Naive thymus-derived CD4-positive, alpha-beta T cell (primary cell): ENCODE measurements at regions of chr3 and their contacts with region 1.

Region 1: GRCh38 chr3:27484015-27484844 is at the start of gene SLC4A7:
- DNase-seq: peak; percentile 95 to 99 (median 97)
- ATAC-seq: peak; percentile 96
- H3K4me3 ChIP-seq: peak within 1 kb of the TSS; percentile 96
- H3K4me3 Mint-ChIP-seq: peak within 1 kb of the TSS; percentile 94 to 100 (median 99)
- H3K27ac ChIP-seq: peak within 1 kb of the TSS; percentile 90
- H3K27ac Mint-ChIP-seq: peak within 1 kb of the TSS; percentile 90 to 99 (median 95)
- H3K4me1 ChIP-seq: peaks cover 25 to 29% of the 10 kb centered on the region in 2 donors
- H3K4me1 Mint-ChIP-seq: peaks cover 35 to 42% (median 39%) of the 10 kb centered on the region in 7 donors
- H3K27me3 ChIP-seq: no peaks in the 10 kb centered on the region
- H3K27me3 Mint-ChIP-seq: no peaks in the 10 kb centered on the region
- total RNA-seq, gene SLC4A7: 34.9 to 69.1 (median 41.5) TPM

Region 2: GRCh38 chr3:25664810-25665314 is 1819.4 kb before region 1 on chr3 and contains the start of gene TOP2B:
- CTCF ChIA-PET with region 1: interaction called, 3 read pairs
- POLR2A ChIA-PET with region 1: no interaction called
- intact Hi-C with region 1: loop called (anchors 5 to 10 kb)
- DNase-seq: peak; percentile 87 to 96 (median 95)
- ATAC-seq: peak; percentile 96
- H3K4me3 ChIP-seq: peak within 1 kb of the TSS; percentile 63
- H3K4me3 Mint-ChIP-seq: peak within 1 kb of the TSS; percentile 89 to 100 (median 99)
- H3K27ac ChIP-seq: peak within 1 kb of the TSS; percentile 95
- H3K27ac Mint-ChIP-seq: peak within 1 kb of the TSS; percentile 97 to 100 (median 99)
- H3K4me1 ChIP-seq: peaks cover 11 to 34% of the 10 kb centered on the region in 2 donors
- H3K4me1 Mint-ChIP-seq: peaks cover 20 to 57% (median 50%) of the 10 kb centered on the region in 7 donors
- H3K27me3 ChIP-seq: no peaks in the 10 kb centered on the region
- H3K27me3 Mint-ChIP-seq: peaks cover 0 to 4% (median 0%) of the 10 kb centered on the region in 5 donors
- total RNA-seq, gene TOP2B: 109 to 190 (median 127) TPM

Region 3: GRCh38 chr3:27368831-27369607 is 115.2 kb before region 1 on chr3 and contains the start of gene NEK10:
- CTCF ChIA-PET with region 1: no interaction called
- POLR2A ChIA-PET with region 1: interaction called, 3 read pairs
- intact Hi-C with region 1: loop called (anchors 1 kb)
- DNase-seq: peak; percentile 86 to 94 (median 91)
- ATAC-seq: peak; percentile 100
- H3K4me3 ChIP-seq: peak within 1 kb of the TSS; percentile 96
- H3K4me3 Mint-ChIP-seq: peak within 1 kb of the TSS; percentile 81 to 96 (median 93)
- H3K27ac ChIP-seq: peak within 1 kb of the TSS; percentile 11
- H3K27ac Mint-ChIP-seq: peak within 1 kb of the TSS; percentile 26 to 91 (median 85)
- H3K4me1 ChIP-seq: peaks cover 5 to 9% of the 10 kb centered on the region in 2 donors
- H3K4me1 Mint-ChIP-seq: peaks cover 7 to 18% (median 14%) of the 10 kb centered on the region in 7 donors
- H3K27me3 ChIP-seq: no peaks in the 10 kb centered on the region
- H3K27me3 Mint-ChIP-seq: peaks cover 0 to 4% (median 0%) of the 10 kb centered on the region in 5 donors
- total RNA-seq, gene NEK10: 0.64 to 2.0 (median 0.95) TPM

Region 4: DNA sequence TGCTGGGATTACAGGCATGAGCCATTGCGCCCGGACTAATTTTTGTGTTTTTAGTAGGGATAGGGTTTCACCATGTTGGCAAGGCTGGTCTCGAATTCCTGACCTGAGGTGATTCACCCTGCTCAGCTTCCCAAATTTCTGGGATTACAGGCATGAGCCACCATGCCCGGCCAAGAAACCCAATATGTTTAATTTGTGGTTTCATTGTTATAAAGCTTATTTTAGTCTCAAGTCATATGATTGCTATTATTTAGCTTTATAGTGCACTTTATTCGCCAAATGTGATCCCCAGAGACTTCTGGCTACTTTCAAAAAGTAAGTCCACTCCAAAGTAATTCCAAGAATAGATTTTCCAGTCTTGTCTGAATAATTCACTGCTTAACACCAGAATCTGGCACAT is 19.3 kb after region 1 on chr3:
- CTCF ChIA-PET with region 1: no interaction called
- POLR2A ChIA-PET with region 1: no interaction called
- intact Hi-C with region 1: no loop called
- DNase-seq: no peak
- ATAC-seq: no peak
- H3K4me3 ChIP-seq: no peak overlapping the region
- H3K4me3 Mint-ChIP-seq: no peak overlapping the region
- H3K27ac ChIP-seq: no peak overlapping the region
- H3K27ac Mint-ChIP-seq: no peak overlapping the region
- H3K4me1 ChIP-seq: no peaks in the 10 kb centered on the region
- H3K4me1 Mint-ChIP-seq: peaks cover 0 to 2% (median 0%) of the 10 kb centered on the region in 7 donors
- H3K27me3 ChIP-seq: no peaks in the 10 kb centered on the region
- H3K27me3 Mint-ChIP-seq: no peaks in the 10 kb centered on the region

Region 5: DNA sequence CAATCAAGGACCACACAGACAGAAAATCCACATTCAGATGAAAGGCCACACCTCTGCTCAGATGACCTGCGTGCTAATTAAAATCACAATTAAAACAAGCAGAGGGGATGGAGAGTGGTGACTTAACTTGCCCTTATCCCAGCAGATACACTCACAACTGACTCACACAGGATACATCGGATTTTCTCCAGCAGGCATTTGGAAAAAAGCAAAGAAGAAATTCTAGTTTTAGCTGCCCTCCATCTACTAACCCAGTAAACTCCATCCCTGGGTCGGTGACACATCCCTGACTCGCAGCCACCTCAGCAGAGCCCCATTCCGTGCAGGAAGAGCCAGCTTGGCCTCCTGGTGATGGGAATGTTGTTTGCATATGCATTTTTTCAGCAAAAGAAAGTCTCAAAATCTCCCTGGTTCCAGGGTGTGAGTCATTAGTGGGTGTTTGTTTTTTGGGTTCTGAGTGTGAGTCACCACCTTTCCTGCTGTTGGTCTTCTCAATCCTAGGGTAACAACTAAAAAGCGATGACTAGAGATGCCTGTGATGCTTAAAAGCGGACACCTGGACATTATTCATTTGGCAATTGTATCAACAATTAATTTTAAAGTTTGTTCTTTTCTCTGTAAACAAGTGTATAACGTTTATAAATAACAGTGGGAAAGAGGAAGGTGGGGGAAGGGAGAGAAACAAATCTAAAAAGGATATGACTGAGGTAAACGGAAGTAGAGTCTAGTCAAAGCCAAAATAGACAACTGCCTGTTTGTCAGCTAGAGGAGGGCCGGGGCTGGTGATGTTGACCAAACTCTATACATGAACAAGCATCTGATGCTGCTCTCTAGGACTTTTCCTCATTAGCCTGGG is 49.7 kb after region 1 on chr3:
- CTCF ChIA-PET with region 1: no interaction called
- POLR2A ChIA-PET with region 1: no interaction called
- intact Hi-C with region 1: loop called (anchors 2 to 5 kb)
- DNase-seq: peak in 1 of 9 donors; percentile 24
- ATAC-seq: peak; percentile 88
- H3K4me3 ChIP-seq: peak overlapping the region; percentile 22
- H3K4me3 Mint-ChIP-seq: peak overlapping the region in 3 of 10 donors; percentile 18 to 49 (median 31)
- H3K27ac ChIP-seq: no peak overlapping the region
- H3K27ac Mint-ChIP-seq: peak overlapping the region in 4 of 9 donors; percentile 61 to 89 (median 82)
- H3K4me1 ChIP-seq: peaks cover 0 to 11% of the 10 kb centered on the region in 2 donors
- H3K4me1 Mint-ChIP-seq: peaks cover 8 to 22% (median 11%) of the 10 kb centered on the region in 7 donors
- H3K27me3 ChIP-seq: no peaks in the 10 kb centered on the region
- H3K27me3 Mint-ChIP-seq: no peaks in the 10 kb centered on the region

Region 6: DNA sequence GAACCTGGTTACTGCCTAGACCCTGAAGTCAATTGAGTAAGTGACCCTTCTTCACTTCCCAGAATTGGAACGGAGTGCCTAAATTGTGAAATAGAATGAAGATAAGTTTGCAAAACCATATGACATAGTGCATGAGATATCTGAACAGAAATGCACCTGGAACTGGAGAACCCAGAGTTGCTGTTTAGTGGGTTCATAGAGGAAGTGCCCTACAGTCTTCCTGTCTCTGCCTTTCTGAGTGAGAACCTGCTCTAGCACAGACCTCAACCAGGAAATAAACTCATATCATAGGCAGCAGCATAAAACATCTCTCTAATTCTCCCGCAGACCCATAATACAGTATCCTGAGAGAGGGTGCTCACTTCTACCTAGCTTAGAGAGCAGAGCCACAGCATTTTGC is 155.0 kb after region 1 on chr3:
- CTCF ChIA-PET with region 1: interaction called, 3 read pairs
- POLR2A ChIA-PET with region 1: interaction called, 3 read pairs
- intact Hi-C with region 1: loop called in 1 of 2 experiments (anchors 2 kb)
- DNase-seq: peak in 6 of 9 donors; percentile 33 to 70 (median 61)
- ATAC-seq: peak; percentile 91
- H3K4me3 ChIP-seq: no peak overlapping the region
- H3K4me3 Mint-ChIP-seq: peak overlapping the region; percentile 18 to 75 (median 56)
- H3K27ac ChIP-seq: peak overlapping the region; percentile 65
- H3K27ac Mint-ChIP-seq: peak overlapping the region; percentile 74 to 93 (median 90)
- H3K4me1 ChIP-seq: peaks cover 11 to 18% of the 10 kb centered on the region in 2 donors
- H3K4me1 Mint-ChIP-seq: peaks cover 10 to 26% (median 21%) of the 10 kb centered on the region in 7 donors
- H3K27me3 ChIP-seq: no peaks in the 10 kb centered on the region
- H3K27me3 Mint-ChIP-seq: peaks cover 0 to 7% (median 0%) of the 10 kb centered on the region in 5 donors

Region 7: DNA sequence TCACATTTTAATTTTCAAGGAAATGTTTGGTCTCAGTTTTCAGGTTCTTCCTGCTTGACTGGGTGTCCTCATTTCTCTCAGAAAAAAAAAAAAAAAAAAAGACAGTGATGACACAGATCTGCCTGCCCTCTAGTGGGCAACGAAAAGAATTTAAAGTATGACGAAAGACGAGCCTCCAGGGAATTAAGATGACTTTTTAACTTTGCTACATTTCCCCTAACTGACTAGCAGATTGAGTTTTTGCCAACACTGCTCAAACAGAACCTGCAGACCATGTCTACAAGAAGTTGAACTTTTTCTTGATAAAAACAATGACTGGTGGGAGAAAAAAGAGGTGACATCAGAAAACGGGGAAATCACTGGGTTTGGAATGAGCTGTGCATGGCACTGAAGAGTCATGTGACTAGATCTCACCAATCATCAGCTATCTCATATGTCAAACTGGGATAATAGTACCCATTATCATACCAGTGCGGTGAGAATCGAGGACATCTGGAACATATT is 197.1 kb after region 1 on chr3:
- CTCF ChIA-PET with region 1: no interaction called
- POLR2A ChIA-PET with region 1: interaction called, 3 read pairs
- intact Hi-C with region 1: loop called (anchors 1 to 5 kb)
- DNase-seq: peak in 7 of 9 donors; percentile 23 to 74 (median 64)
- ATAC-seq: peak; percentile 89
- H3K4me3 ChIP-seq: no peak overlapping the region
- H3K4me3 Mint-ChIP-seq: peak overlapping the region in 9 of 10 donors; percentile 25 to 83 (median 66)
- H3K27ac ChIP-seq: no peak overlapping the region
- H3K27ac Mint-ChIP-seq: peak overlapping the region in 5 of 9 donors; percentile 3 to 77 (median 53)
- H3K4me1 ChIP-seq: no peaks in the 10 kb centered on the region
- H3K4me1 Mint-ChIP-seq: peaks cover 6 to 15% (median 10%) of the 10 kb centered on the region in 7 donors
- H3K27me3 ChIP-seq: no peaks in the 10 kb centered on the region
- H3K27me3 Mint-ChIP-seq: peaks cover 0 to 21% (median 4%) of the 10 kb centered on the region in 5 donors

Region 8: DNA sequence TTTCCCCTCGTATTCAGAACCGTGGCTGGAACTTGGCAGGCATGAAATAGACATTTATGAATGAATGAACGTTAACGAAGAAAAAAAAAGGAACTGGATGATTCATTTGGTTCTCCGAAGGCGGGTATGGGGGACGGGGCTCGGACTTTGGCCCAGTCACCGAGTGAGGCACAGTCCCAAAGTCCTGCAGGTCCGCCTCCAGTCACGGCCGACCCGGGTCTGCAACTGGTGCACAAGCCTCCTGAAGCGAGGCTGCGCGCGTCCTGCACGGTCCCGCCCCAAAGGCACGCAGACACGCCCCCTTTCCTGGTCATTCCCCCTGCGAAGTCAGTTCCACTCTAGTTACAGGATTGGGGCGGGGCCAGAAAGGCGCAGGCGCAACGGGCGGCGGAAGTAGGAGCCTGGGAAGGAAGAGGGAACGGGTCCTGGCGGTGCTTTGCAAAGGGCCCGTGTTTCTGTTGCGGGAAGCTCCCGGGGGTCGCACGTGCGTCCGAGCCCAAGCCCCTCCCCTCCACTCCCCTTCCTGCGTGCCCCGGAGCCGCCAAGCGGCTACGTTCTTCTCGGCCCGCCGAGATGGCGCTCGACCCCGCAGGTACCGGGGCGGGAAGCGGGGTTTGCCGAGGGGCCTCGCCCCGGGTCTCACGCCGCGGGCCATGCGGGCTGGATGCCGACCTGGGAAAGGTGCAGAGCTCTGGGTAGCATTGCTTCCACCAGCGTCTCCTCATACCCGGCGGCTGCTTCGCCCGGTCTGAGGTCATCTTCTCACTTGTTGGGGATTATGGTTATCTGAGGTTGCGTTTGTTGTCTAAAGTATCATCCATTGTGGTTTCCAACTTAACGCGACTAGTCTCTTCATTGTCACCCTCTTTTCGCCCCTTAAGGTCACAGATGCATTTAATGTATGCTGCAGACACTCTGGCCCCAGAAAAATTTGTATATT is 757.3 kb after region 1 on chr3 and contains the start of gene CMC1:
- CTCF ChIA-PET with region 1: no interaction called
- POLR2A ChIA-PET with region 1: no interaction called
- intact Hi-C with region 1: loop called (anchors 1 to 2 kb)
- DNase-seq: peak; percentile 69 to 93 (median 83)
- ATAC-seq: peak; percentile 95
- H3K4me3 ChIP-seq: peak within 1 kb of the TSS; percentile 71
- H3K4me3 Mint-ChIP-seq: peak within 1 kb of the TSS; percentile 88 to 97 (median 96)
- H3K27ac ChIP-seq: peak within 1 kb of the TSS; percentile 71
- H3K27ac Mint-ChIP-seq: peak within 1 kb of the TSS; percentile 85 to 96 (median 94)
- H3K4me1 ChIP-seq: peaks cover 16 to 40% of the 10 kb centered on the region in 2 donors
- H3K4me1 Mint-ChIP-seq: peaks cover 32 to 77% (median 60%) of the 10 kb centered on the region in 7 donors
- H3K27me3 ChIP-seq: no peaks in the 10 kb centered on the region
- H3K27me3 Mint-ChIP-seq: no peaks in the 10 kb centered on the region
- total RNA-seq, gene CMC1: 11.0 to 25.1 (median 13.9) TPM